ENCODE measurements at regions of chr12 and their contacts with region 1.

Region 1: GRCh38 chr12:109518820-109519665 is 41.6 kb downstream of the UBE3B start:
- DNase-seq: peak in 1 of 2 experiments; percentile 86
- H3K4me3 ChIP-seq: no peak overlapping the region
- H3K27ac ChIP-seq: no peak overlapping the region
- H3K4me1 ChIP-seq: peaks cover 0 to 7% (median 0%) of the 10 kb centered on the region in 4 experiments; a peak in 1 of 7 replicates
- H3K27me3 ChIP-seq: no peaks in the 10 kb centered on the region
- CTCF ChIP-seq: peak; percentile 66 to 88 (median 77)
- EP300 ChIP-seq: no peak
- POLR2A ChIP-seq: no peak
- RAD21 ChIP-seq: peak; percentile 80 to 84

Region 2: GRCh38 chr12:109504068-109504467 is 15.0 kb before region 1 on chr12:
- CTCF ChIA-PET with region 1: interaction called, 33 read pairs
- POLR2A ChIA-PET with region 1: interaction called, 3 read pairs
- DNase-seq: no peak
- H3K4me3 ChIP-seq: no peak overlapping the region
- H3K27ac ChIP-seq: no peak overlapping the region
- H3K4me1 ChIP-seq: no peaks in the 10 kb centered on the region
- H3K27me3 ChIP-seq: no peaks in the 10 kb centered on the region
- CTCF ChIP-seq: no peak
- EP300 ChIP-seq: no peak
- POLR2A ChIP-seq: no peak
- RAD21 ChIP-seq: no peak

Region 3: GRCh38 chr12:109529691-109530640 is 10.9 kb after region 1 on chr12:
- CTCF ChIA-PET with region 1: interaction called, 14 read pairs
- POLR2A ChIA-PET with region 1: no interaction called
- DNase-seq: no peak
- H3K4me3 ChIP-seq: no peak overlapping the region
- H3K27ac ChIP-seq: no peak overlapping the region
- H3K4me1 ChIP-seq: peaks cover 0 to 6% (median 2%) of the 10 kb centered on the region in 4 experiments; a peak in 4 of 7 replicates
- H3K27me3 ChIP-seq: no peaks in the 10 kb centered on the region
- CTCF ChIP-seq: no peak
- EP300 ChIP-seq: no peak
- POLR2A ChIP-seq: no peak
- RAD21 ChIP-seq: no peak

Region 4: DNA sequence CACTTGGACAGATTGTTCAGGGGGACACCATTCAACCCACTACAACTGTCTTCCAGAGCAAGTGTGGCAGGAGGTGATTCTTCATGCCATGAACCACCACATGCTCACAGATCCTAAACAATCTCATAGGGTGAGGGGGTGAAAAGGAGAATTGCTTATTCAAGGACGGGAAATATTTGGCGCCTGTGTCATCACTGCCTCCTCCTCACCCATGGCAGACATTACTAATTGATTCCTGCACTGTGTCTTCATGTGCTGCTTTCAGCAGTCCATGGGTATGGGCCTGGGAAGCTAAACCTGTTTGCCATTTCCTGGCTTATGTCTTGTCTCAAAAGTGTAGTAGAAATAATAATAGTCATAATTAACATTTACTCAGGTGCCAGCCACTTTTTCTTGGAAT is 23.0 kb after region 1 on chr12:
- CTCF ChIA-PET with region 1: interaction called, 47 read pairs
- POLR2A ChIA-PET with region 1: no interaction called
- DNase-seq: no peak
- H3K4me3 ChIP-seq: no peak overlapping the region
- H3K27ac ChIP-seq: no peak overlapping the region
- H3K4me1 ChIP-seq: no peaks in the 10 kb centered on the region
- H3K27me3 ChIP-seq: no peaks in the 10 kb centered on the region
- CTCF ChIP-seq: no peak
- EP300 ChIP-seq: no peak
- POLR2A ChIP-seq: no peak
- RAD21 ChIP-seq: no peak

Region 5: GRCh38 chr12:109549613-109550270 is 30.7 kb after region 1 on chr12:
- CTCF ChIA-PET with region 1: interaction called, 25 read pairs
- POLR2A ChIA-PET with region 1: interaction called, 3 read pairs
- DNase-seq: no peak
- H3K4me3 ChIP-seq: no peak overlapping the region
- H3K27ac ChIP-seq: no peak overlapping the region
- H3K4me1 ChIP-seq: no peaks in the 10 kb centered on the region
- H3K27me3 ChIP-seq: no peaks in the 10 kb centered on the region; a peak in 3 of 7 replicates
- CTCF ChIP-seq: no peak
- EP300 ChIP-seq: no peak
- POLR2A ChIP-seq: no peak
- RAD21 ChIP-seq: no peak

Region 6: GRCh38 chr12:109563291-109564284 is 44.5 kb after region 1 on chr12:
- CTCF ChIA-PET with region 1: interaction called, 40 read pairs
- POLR2A ChIA-PET with region 1: no interaction called
- DNase-seq: no peak
- H3K4me3 ChIP-seq: no peak overlapping the region
- H3K27ac ChIP-seq: no peak overlapping the region
- H3K4me1 ChIP-seq: no peaks in the 10 kb centered on the region
- H3K27me3 ChIP-seq: no peaks in the 10 kb centered on the region
- CTCF ChIP-seq: no peak
- EP300 ChIP-seq: no peak
- POLR2A ChIP-seq: no peak
- RAD21 ChIP-seq: no peak

Region 7: DNA sequence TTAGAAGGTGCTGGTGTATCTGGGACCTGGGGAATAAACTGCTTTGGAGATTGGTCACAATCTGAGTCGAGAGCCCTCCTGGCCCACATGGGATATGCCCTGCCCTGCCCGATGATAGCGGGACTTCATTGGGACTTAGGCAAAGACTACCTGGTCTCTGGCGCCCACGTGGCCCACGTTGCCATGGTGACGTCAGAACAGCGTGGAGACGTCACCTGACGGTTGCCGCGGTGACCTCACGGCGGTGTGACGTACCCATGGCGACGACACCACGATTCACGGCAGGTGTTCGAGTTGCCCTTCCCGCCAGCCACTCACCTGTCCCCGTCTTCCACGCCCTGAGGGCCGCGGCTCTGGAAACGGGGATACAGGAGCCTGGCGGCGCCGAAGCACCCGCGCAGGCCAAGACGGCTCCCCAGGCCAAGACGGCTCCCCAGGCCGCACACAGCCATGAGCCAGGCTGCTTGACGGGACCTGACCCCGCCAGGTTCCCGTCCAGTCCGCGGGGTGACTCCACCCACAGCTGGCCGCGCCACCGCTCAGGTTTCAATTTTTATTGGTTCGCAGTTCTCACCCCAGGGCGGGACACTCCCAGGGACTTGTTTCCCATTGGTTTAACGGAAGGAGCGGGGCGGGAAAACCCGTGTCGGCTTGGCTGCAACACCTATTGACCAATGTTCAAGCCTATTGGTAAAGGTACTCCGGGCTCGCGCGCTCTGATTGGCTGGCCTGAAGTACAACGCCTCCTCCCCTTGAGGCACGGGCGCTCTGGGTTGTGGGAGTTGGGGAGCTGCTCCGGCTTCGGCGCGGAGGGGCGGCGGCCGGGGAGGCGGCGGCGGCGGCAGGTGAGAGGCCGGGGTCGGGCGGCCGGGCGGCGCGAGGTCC is 54.2 kb after region 1 on chr12 and contains the starts of genes MMAB and MVK:
- CTCF ChIA-PET with region 1: interaction called, 40 read pairs
- POLR2A ChIA-PET with region 1: no interaction called
- DNase-seq: peak; percentile 96 to 99
- H3K4me3 ChIP-seq: peak within 1 kb of the TSS; percentile 80 to 87 (median 81)
- H3K27ac ChIP-seq: peak within 1 kb of the TSS; percentile 91
- H3K4me1 ChIP-seq: peaks cover 2 to 4% (median 3%) of the 10 kb centered on the region in 4 experiments; a peak in 4 of 7 replicates
- H3K27me3 ChIP-seq: no peaks in the 10 kb centered on the region
- CTCF ChIP-seq: peak in 1 of 3 experiments; percentile 8; a peak in 1 of 4 replicates
- EP300 ChIP-seq: no peak
- POLR2A ChIP-seq: peak in 1 of 2 experiments; percentile 81; a peak in 2 of 3 replicates
- RAD21 ChIP-seq: no peak
- total RNA-seq, gene MMAB: 17.1 and 18.5 TPM in 2 replicates
- total RNA-seq, gene MVK: 15.7 and 17.0 TPM in 2 replicates

Region 8: GRCh38 chr12:109729371-109729781 is 210.3 kb after region 1 on chr12:
- CTCF ChIA-PET with region 1: no interaction called
- POLR2A ChIA-PET with region 1: no interaction called
- DNase-seq: no peak
- H3K4me3 ChIP-seq: no peak overlapping the region
- H3K27ac ChIP-seq: no peak overlapping the region
- H3K4me1 ChIP-seq: no peaks in the 10 kb centered on the region; a peak in 2 of 7 replicates
- H3K27me3 ChIP-seq: no peaks in the 10 kb centered on the region
- CTCF ChIP-seq: no peak
- EP300 ChIP-seq: no peak
- POLR2A ChIP-seq: no peak
- RAD21 ChIP-seq: no peak

Measured in H1 (cell line).